ENCODE measurements at regions of chr10 and their contacts with region 1.

Region 1: DNA sequence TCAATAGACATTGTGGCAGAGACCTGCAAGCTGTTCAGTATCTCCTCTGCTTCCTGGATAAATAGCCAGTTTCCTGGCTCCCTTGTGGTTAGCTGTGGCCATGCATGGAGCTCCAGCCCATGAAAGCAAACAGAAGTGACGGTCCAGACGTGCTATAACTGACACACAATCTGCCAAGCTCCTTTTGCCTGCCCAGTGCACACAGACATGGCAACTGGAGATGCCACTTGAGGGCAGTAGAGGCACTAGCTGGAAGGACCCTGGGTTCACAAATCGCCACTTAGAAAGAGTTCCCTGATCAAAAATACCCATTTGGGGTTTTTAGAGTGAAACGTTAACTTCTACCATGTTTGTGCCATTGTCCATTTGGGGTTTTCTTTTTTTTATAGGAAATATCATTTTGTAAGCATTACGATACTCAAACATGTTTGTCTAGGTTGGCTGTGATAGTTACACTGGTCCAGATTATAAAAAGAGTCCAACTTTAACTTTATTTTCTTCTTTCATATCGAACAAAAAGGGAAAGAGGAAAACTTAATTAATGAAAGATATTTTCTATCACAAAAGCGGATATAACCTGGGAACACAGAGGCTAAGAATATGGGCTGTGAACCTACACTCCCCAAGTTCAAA is 31.3 kb downstream of the KIN start:
- DNase-seq: peak; percentile 21
- ATAC-seq: peak; percentile 92
- H3K4me3 ChIP-seq: no peak overlapping the region
- H3K27ac ChIP-seq: no peak overlapping the region
- H3K4me1 ChIP-seq: no peaks in the 10 kb centered on the region
- H3K27me3 ChIP-seq: no peaks in the 10 kb centered on the region
- CTCF ChIP-seq: peak; percentile 14 to 86 (median 70); a peak in 5 of 6 replicates
- POLR2A ChIP-seq: no peak
- RAD21 ChIP-seq: peak; percentile 56

Region 2: DNA sequence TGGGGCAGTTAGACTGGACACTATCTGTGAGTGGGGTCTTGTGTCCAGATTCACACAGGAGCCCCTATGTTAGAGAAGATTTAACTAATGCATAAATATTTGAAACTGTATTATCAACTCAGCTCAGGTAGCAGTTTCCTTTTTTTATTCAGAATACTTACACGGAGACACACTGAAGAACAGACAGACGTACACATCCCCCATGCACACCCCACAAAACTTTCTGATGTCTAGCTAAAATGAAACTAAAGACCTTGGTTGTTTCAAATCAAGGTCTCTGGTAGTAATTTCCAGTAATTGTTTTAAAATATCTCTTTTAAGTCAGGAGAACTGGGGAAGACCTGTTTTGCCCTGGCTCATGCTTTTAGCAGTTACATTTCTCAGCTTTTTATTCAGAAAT is 1120.7 kb before region 1 on chr10:
- CTCF ChIA-PET with region 1: no interaction called
- POLR2A ChIA-PET with region 1: no interaction called
- RAD21 ChIA-PET with region 1: no interaction called
- intact Hi-C with region 1: no loop called
- DNase-seq: no peak
- ATAC-seq: no peak
- H3K4me3 ChIP-seq: no peak overlapping the region
- H3K27ac ChIP-seq: no peak overlapping the region
- H3K4me1 ChIP-seq: no peaks in the 10 kb centered on the region
- H3K27me3 ChIP-seq: peaks cover 46% of the 10 kb centered on the region
- CTCF ChIP-seq: no peak
- POLR2A ChIP-seq: no peak
- RAD21 ChIP-seq: no peak

Region 3: DNA sequence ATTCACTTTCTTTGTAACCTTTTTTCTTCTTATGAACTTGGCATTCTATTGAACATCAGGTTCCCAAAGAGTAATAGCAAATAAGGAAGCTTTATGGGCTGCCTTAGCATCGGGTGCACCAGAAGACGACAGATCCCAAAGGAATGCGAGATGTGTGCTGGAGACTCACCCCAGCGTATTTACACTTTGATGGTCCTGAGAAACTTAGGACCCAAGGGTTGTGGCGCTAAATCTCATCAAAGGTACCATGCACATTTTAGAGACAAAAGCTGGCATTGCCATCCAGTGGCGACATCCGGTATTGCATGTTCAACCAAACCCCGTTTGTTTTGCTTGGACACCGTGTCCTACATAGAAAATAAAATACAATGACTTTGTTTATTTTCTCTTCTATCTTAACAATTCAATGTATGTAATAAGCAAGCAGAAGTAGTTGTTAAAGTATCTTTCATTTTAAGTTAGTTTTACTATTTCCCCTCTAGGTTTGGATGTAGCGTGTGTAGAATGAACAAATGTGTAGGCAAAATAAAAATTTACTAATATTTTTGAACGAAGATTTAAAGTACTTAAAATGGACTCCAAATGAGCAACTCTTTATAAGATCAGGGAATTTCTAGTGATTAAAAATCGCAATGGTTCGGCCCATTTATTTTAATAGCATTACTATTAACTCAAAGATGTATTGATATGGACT is 1452.8 kb after region 1 on chr10:
- CTCF ChIA-PET with region 1: no interaction called
- POLR2A ChIA-PET with region 1: no interaction called
- RAD21 ChIA-PET with region 1: no interaction called
- intact Hi-C with region 1: loop called (anchors 5 kb)
- DNase-seq: peak; percentile 33
- ATAC-seq: peak; percentile 47
- H3K4me3 ChIP-seq: no peak overlapping the region
- H3K27ac ChIP-seq: no peak overlapping the region
- H3K4me1 ChIP-seq: no peaks in the 10 kb centered on the region
- H3K27me3 ChIP-seq: no peaks in the 10 kb centered on the region
- CTCF ChIP-seq: peak; percentile 32 to 80 (median 75); a peak in 5 of 6 replicates
- POLR2A ChIP-seq: no peak
- RAD21 ChIP-seq: peak; percentile 61

Region 4: GRCh38 chr10:9302120-9302746 is 1545.8 kb after region 1 on chr10:
- CTCF ChIA-PET with region 1: no interaction called
- POLR2A ChIA-PET with region 1: no interaction called
- RAD21 ChIA-PET with region 1: no interaction called
- intact Hi-C with region 1: loop called (anchors 2 kb)
- DNase-seq: peak; percentile 23
- ATAC-seq: 0 out of 2 replicates have a peak, but pooled peaks have one; percentile 40
- H3K4me3 ChIP-seq: no peak overlapping the region
- H3K27ac ChIP-seq: no peak overlapping the region
- H3K4me1 ChIP-seq: no peaks in the 10 kb centered on the region
- H3K27me3 ChIP-seq: no peaks in the 10 kb centered on the region
- CTCF ChIP-seq: peak in 2 of 3 experiments; percentile 26 to 48; a peak in 3 of 6 replicates
- POLR2A ChIP-seq: no peak
- RAD21 ChIP-seq: peak; percentile 52